Heart right ventricle (tissue), 16 donors: ENCODE measurements at regions of chr11 and their contacts with region 1.

Region 1: DNA sequence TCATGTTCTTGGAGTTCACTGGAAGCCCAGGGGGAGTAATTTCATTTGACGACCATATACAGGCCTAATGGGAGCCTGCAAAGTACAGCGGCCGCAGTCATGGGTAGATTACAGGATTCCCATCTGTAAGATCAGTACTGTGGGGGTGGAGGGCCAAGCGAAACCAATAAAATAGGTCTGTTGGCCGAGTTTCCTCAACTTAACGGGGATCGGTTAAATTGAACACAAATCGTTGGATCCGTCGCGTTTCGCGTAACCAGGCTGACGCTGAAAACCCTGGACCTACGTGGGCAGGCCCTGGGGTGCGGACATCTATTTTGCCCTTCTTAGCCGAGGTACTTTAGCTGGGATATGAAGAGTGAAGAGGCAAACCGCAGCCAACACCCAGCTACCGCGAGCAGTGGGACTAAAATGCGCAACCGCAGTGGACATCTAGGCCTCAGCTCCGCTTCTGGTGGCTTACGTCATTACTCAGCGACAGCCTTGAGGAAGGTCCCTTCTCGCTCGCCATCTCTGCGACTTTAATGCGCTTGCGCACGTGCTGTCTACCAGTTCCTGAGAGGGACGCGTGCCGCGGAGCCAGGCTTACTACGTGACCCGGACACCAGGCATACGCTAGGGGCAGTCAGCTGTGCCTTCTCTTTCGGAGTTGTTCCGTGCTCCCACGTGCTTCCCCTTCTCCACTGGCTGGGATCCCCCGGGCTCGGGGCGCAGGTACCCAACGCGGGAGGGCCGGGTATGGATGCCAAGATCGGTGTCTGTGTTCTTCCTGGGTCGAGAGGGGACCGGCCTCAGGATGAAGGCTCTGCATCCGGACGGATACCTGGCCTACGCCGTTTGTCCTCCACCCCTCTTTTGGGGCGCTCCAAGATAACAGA is at the start of gene NAT10:
- DNase-seq: peak; percentile 93 to 98
- ATAC-seq: peak; percentile 95 to 99 (median 98)
- H3K4me3 ChIP-seq: peak within 1 kb of the TSS; percentile 61 to 93 (median 80)
- H3K27ac ChIP-seq: peak within 1 kb of the TSS; percentile 58 to 97 (median 94)
- H3K4me1 ChIP-seq: peaks cover 0 to 27% (median 20%) of the 10 kb centered on the region in 9 donors
- H3K27me3 ChIP-seq: no peaks in the 10 kb centered on the region
- CTCF ChIP-seq: peak in 3 of 9 donors; percentile 14 to 33 (median 28)
- total RNA-seq, gene NAT10: 16.6 to 26.4 (median 22.4) TPM

Region 2: DNA sequence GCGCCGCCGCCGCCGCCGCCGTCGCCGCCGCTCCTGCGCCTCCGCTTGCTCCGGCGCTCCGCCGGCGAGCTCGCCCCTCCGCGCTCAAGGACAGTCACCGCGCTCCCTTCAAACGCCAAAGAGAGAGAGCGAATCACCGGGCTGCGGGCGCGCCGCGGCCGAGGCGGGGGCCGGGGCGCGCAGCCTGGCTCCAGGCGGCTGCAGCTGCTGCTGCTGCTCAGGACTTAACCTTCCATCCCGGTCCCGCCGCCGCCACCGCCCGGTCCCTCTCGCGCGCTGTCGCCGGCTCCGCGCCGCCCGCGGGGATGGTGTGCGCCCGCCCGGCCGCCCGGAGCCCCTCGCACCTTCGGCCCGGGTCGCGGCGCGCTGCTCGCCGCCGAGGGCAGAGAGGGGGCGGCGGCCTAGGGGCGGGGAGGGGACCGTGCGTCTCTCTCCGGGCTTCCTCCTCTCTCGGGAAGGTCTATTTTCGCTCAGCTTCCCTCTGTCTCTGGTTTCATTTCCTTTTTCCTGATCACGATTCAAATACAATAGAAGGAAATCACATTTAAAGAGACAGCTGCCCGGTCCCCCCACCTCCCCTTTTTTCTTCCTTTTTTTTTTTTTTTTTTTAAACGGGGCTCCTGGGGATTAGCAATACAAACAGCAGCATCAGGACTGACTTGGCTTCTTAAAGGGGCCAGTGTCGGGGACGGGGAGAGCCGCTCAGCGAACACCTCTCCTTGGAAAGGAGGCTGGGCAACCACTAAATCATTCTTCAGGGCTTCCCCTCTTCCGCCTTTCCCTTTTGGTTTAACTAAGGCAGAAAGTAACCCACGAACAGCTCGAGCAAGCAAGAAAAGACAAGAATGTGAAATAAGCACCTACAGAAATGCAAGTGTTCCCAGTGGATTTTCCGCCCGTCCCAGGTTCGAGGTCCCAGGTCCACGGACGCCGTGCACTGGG is 235.6 kb before region 1 on chr11:
- intact Hi-C with region 1: loop called in 1 of 10 experiments (anchors 5 kb)
- DNase-seq: peak; percentile 62 to 63
- ATAC-seq: peak; percentile 71 to 90 (median 88)
- H3K4me3 ChIP-seq: peak overlapping the region; percentile 44 to 92 (median 72)
- H3K27ac ChIP-seq: peak overlapping the region; percentile 57 to 94 (median 87)
- H3K4me1 ChIP-seq: peaks cover 0 to 69% (median 25%) of the 10 kb centered on the region in 9 donors
- H3K27me3 ChIP-seq: peaks cover 0 to 29% (median 4%) of the 10 kb centered on the region in 7 donors
- CTCF ChIP-seq: no peak

Region 3: GRCh38 chr11:34002268-34002807 is 103.0 kb before region 1 on chr11:
- intact Hi-C with region 1: loop called in 5 of 10 experiments (anchors 5 to 10 kb)
- DNase-seq: no peak
- ATAC-seq: no peak
- H3K4me3 ChIP-seq: no peak overlapping the region
- H3K27ac ChIP-seq: no peak overlapping the region
- H3K4me1 ChIP-seq: peaks cover 0 to 2% (median 0%) of the 10 kb centered on the region in 9 donors
- H3K27me3 ChIP-seq: peaks cover 0 to 25% (median 14%) of the 10 kb centered on the region in 7 donors
- CTCF ChIP-seq: no peak

Region 4: GRCh38 chr11:34051349-34052035 is 53.8 kb before region 1 on chr11 and contains the start of gene CAPRIN1:
- intact Hi-C with region 1: loop called in 8 of 10 experiments (anchors 1 to 10 kb)
- DNase-seq: peak; percentile 88 to 89
- ATAC-seq: peak; percentile 89 to 96 (median 93)
- H3K4me3 ChIP-seq: peak within 1 kb of the TSS; percentile 77 to 99 (median 94)
- H3K27ac ChIP-seq: peak within 1 kb of the TSS; percentile 97 to 100 (median 100)
- H3K4me1 ChIP-seq: peaks cover 11 to 43% (median 37%) of the 10 kb centered on the region in 9 donors
- H3K27me3 ChIP-seq: no peaks in the 10 kb centered on the region
- CTCF ChIP-seq: no peak
- total RNA-seq, gene CAPRIN1: 103 to 142 (median 120) TPM

Region 5: GRCh38 chr11:34068111-34068510 is 37.2 kb before region 1 on chr11:
- intact Hi-C with region 1: loop called in 1 of 10 experiments (anchors 5 kb)
- DNase-seq: peak in 1 of 2 donors; percentile 4
- ATAC-seq: peak; percentile 60 to 94 (median 88)
- H3K4me3 ChIP-seq: no peak overlapping the region
- H3K27ac ChIP-seq: peak overlapping the region in 6 of 10 donors; percentile 32 to 63 (median 44)
- H3K4me1 ChIP-seq: peaks cover 3 to 71% (median 55%) of the 10 kb centered on the region in 9 donors
- H3K27me3 ChIP-seq: no peaks in the 10 kb centered on the region
- CTCF ChIP-seq: no peak

Region 6: GRCh38 chr11:34154059-34154875 is 48.9 kb after region 1 on chr11:
- intact Hi-C with region 1: no loop called
- DNase-seq: no peak
- ATAC-seq: no peak
- H3K4me3 ChIP-seq: no peak overlapping the region
- H3K27ac ChIP-seq: no peak overlapping the region
- H3K4me1 ChIP-seq: peaks cover 0 to 28% (median 4%) of the 10 kb centered on the region in 9 donors
- H3K27me3 ChIP-seq: no peaks in the 10 kb centered on the region
- CTCF ChIP-seq: no peak

Region 7: DNA sequence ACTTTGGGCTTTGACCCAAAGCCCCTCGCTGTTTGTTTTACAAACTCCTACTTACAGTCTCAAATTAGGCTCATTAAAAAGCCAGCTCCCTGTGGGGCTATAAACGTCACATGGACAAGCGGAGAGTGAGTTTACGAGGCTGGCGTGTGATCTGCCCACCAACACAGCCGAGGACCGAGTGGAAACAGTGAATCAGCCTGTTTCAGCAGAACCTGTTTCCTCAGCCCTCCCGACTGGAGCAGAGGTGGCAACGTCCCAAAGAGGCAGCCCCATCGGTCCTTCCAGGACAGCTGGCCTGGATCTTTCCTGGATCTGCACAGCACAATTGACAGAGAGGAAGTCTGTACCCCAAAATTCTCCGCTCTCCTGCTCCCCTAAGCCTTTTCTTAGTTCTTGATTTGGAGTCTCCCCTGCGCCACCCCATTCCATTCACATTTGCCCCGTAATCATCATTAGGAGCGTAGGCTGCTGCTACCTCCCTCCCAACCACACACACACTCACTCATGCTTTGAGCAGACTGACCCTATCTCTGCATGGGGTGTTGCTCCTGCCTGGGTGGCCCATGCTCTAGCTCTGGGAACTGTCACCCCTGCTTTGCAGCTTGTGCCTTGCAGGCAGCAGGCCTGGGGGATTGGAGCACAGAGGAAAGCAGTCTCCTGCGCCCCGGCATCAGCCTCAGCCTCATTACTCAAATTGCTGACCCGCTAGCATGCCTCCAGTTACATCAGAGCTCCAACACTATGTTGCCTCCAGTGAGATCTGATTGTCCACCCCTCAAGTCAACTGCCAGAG is 117.9 kb after region 1 on chr11:
- intact Hi-C with region 1: no loop called
- DNase-seq: peak; percentile 57 to 60
- ATAC-seq: peak; percentile 61 to 80 (median 72)
- H3K4me3 ChIP-seq: no peak overlapping the region
- H3K27ac ChIP-seq: peak overlapping the region in 7 of 10 donors; percentile 19 to 45 (median 35)
- H3K4me1 ChIP-seq: peaks cover 0 to 30% (median 11%) of the 10 kb centered on the region in 9 donors
- H3K27me3 ChIP-seq: no peaks in the 10 kb centered on the region
- CTCF ChIP-seq: no peak

Region 8: GRCh38 chr11:34449013-34449412 is 343.7 kb after region 1 on chr11:
- intact Hi-C with region 1: loop called in 1 of 10 experiments (anchors 10 kb)
- DNase-seq: no peak
- ATAC-seq: no peak
- H3K4me3 ChIP-seq: no peak overlapping the region
- H3K27ac ChIP-seq: peak overlapping the region in 1 of 10 donors; percentile 67
- H3K4me1 ChIP-seq: peaks cover 0 to 68% (median 34%) of the 10 kb centered on the region in 9 donors
- H3K27me3 ChIP-seq: no peaks in the 10 kb centered on the region
- CTCF ChIP-seq: no peak